Mammary epithelial cell (primary cell): ENCODE measurements at regions of chr17 and their contacts with region 1.

Region 1: GRCh38 chr17:3127451-3127850 is at the start of gene OR1G1:
- DNase-seq: no peak
- H3K4me3 ChIP-seq: no peak within 1 kb of the TSS
- H3K27ac ChIP-seq: no peak within 1 kb of the TSS
- H3K4me1 ChIP-seq: no peaks in the 10 kb centered on the region
- H3K27me3 ChIP-seq: no peaks in the 10 kb centered on the region
- CTCF ChIP-seq: no peak
- total RNA-seq, gene OR1G1: not detected

Region 2: GRCh38 chr17:1931759-1932579 is 1195.5 kb before region 1 on chr17:
- CTCF ChIA-PET with region 1: no interaction called
- dilution Hi-C with region 1: no loop called
- in situ Hi-C with region 1: no loop called
- intact Hi-C with region 1: no loop called
- DNase-seq: peak; percentile 8
- H3K4me3 ChIP-seq: no peak overlapping the region
- H3K27ac ChIP-seq: no peak overlapping the region
- H3K4me1 ChIP-seq: no peaks in the 10 kb centered on the region
- H3K27me3 ChIP-seq: peaks cover 3% of the 10 kb centered on the region
- CTCF ChIP-seq: no peak

Region 3: DNA sequence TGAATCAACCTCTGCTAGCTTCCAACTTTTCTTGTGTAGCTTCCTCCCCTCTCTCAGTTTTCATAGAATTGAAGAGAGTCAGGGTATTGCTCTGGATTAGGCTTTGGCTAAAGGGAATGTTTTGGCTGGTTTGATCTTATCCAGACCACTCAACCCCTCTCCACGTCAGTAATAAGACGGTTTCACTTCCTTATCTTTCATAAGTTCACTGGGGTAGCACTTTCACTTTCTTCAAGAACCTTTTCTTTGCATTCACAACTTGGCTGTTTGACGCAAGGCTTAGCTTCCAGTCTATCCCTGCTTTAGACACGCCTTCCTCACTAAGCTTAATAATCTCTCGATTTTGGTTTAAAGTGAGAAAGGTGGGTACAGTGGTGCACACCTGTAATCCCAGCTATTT is 40.1 kb after region 1 on chr17:
- CTCF ChIA-PET with region 1: no interaction called
- dilution Hi-C with region 1: loop called (anchors 5 kb)
- in situ Hi-C with region 1: no loop called
- intact Hi-C with region 1: no loop called
- DNase-seq: no peak
- H3K4me3 ChIP-seq: no peak overlapping the region
- H3K27ac ChIP-seq: no peak overlapping the region
- H3K4me1 ChIP-seq: no peaks in the 10 kb centered on the region
- H3K27me3 ChIP-seq: peaks cover 1% of the 10 kb centered on the region
- CTCF ChIP-seq: no peak